ENCODE measurements at regions of chr17 and their contacts with region 1.

Region 1: GRCh38 chr17:2814481-2815341 is 18.5 kb downstream of the RAP1GAP2 start:
- DNase-seq: peak; percentile 98
- H3K4me3 Mint-ChIP-seq: peak overlapping the region; percentile 72
- H3K27ac Mint-ChIP-seq: peak overlapping the region; percentile 93
- H3K4me1 Mint-ChIP-seq: peaks cover 51% of the 10 kb centered on the region
- H3K27me3 Mint-ChIP-seq: peaks cover 22% of the 10 kb centered on the region

Region 2: GRCh38 chr17:2736956-2737355 is 77.8 kb before region 1 on chr17:
- CTCF ChIA-PET with region 1: no interaction called
- POLR2A ChIA-PET with region 1: no interaction called
- DNase-seq: no peak
- H3K4me3 Mint-ChIP-seq: no peak overlapping the region
- H3K27ac Mint-ChIP-seq: no peak overlapping the region
- H3K4me1 Mint-ChIP-seq: no peaks in the 10 kb centered on the region
- H3K27me3 Mint-ChIP-seq: peaks cover 5% of the 10 kb centered on the region

Region 3: GRCh38 chr17:2749784-2750181 is 64.9 kb before region 1 on chr17:
- CTCF ChIA-PET with region 1: no interaction called
- POLR2A ChIA-PET with region 1: no interaction called
- DNase-seq: peak; percentile 77
- H3K4me3 Mint-ChIP-seq: no peak overlapping the region
- H3K27ac Mint-ChIP-seq: no peak overlapping the region
- H3K4me1 Mint-ChIP-seq: peaks cover 3% of the 10 kb centered on the region
- H3K27me3 Mint-ChIP-seq: peaks cover 35% of the 10 kb centered on the region

Region 4: GRCh38 chr17:2796164-2797125 is 18.3 kb before region 1 on chr17 and contains the start of gene RAP1GAP2:
- CTCF ChIA-PET with region 1: interaction called, 137 read pairs
- POLR2A ChIA-PET with region 1: interaction called, 346 read pairs
- DNase-seq: peak; percentile 91
- H3K4me3 Mint-ChIP-seq: peak within 1 kb of the TSS; percentile 97
- H3K27ac Mint-ChIP-seq: peak within 1 kb of the TSS; percentile 77
- H3K4me1 Mint-ChIP-seq: peaks cover 86% of the 10 kb centered on the region
- H3K27me3 Mint-ChIP-seq: peaks cover 18% of the 10 kb centered on the region
- total RNA-seq, gene RAP1GAP2: 36.7 to 39.8 TPM

Region 5: DNA sequence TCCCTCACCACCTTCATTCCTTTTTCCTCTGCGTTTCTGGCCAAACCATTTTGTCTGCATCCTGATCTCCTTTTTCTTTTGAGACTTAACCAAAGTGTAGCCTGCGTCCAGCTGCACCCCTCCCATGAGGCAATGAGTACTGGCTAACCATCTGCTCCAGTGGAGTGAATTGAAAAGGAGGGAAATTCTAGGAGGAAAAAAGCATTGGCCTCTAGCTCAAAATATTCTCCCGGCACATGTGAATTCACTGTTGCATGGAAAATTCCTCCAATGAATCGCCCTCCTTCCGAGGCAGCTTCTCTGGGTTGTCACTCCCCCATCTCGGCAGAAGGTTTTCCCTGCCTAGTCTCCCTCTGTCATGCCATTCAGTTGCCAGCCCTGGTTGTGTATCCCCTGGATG is 12.9 kb before region 1 on chr17:
- CTCF ChIA-PET with region 1: interaction called, 137 read pairs
- POLR2A ChIA-PET with region 1: interaction called, 346 read pairs
- DNase-seq: no peak
- H3K4me3 Mint-ChIP-seq: no peak overlapping the region
- H3K27ac Mint-ChIP-seq: no peak overlapping the region
- H3K4me1 Mint-ChIP-seq: peaks cover 47% of the 10 kb centered on the region
- H3K27me3 Mint-ChIP-seq: peaks cover 9% of the 10 kb centered on the region

Region 6: DNA sequence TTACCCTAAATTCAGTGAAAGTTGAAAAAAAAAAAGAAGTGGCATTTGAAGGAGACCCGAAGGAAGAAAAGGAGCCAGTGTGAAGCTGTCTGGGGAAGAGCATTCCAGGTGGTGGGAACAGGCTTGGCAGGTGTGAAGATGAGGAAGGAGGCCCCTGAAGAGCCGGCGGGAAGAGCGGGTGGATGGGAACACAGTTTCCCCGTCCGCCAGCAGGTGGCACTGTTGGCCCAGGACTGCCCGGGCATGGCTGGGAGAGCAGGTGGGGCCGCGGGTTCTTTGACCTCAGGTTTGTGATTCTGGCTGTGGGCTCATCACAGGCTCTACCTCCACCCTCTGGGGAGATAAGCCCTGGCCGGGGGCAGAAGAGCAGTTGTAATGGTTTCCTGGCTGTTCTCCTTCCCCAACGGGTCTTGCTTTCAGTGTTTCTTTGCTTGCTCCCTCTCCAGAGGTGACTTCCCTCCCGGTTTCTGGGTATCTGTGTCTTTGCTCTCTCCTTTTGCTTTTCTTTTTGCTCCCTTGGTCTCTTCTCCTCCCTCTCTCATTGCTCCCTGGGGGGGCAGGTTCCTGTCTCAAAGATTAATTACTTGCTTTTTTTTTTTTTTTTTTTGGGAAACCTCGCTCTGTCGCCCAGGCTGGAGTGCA is 13.8 kb after region 1 on chr17:
- CTCF ChIA-PET with region 1: interaction called, 39 read pairs
- POLR2A ChIA-PET with region 1: interaction called, 8 read pairs
- DNase-seq: peak; percentile 81
- H3K4me3 Mint-ChIP-seq: no peak overlapping the region
- H3K27ac Mint-ChIP-seq: no peak overlapping the region
- H3K4me1 Mint-ChIP-seq: peaks cover 40% of the 10 kb centered on the region
- H3K27me3 Mint-ChIP-seq: peaks cover 7% of the 10 kb centered on the region

Region 7: DNA sequence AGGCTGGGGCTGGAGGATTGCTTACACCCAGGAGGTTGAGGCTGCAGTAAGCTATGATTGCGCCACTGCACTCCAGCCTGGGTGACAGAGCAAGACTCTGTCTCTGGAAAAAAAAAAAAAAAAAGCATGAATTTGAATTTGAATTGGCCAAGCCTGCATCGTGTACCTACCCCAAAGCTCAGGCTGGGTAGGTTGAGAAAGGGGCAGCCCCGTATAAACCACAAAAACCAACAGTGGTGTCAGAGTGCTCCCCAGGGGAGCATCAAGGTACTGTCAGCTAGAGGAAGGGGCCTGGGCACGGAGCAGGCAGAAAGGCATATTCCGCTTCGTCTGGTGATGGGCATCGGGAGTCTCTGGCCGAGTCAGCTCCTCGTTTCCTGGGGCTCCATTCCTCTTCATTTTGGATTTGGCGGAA is 22.4 kb after region 1 on chr17:
- CTCF ChIA-PET with region 1: interaction called, 9 read pairs
- POLR2A ChIA-PET with region 1: interaction called, 10 read pairs
- DNase-seq: peak; percentile 49
- H3K4me3 Mint-ChIP-seq: no peak overlapping the region
- H3K27ac Mint-ChIP-seq: no peak overlapping the region
- H3K4me1 Mint-ChIP-seq: peaks cover 23% of the 10 kb centered on the region
- H3K27me3 Mint-ChIP-seq: peaks cover 2% of the 10 kb centered on the region

Region 8: DNA sequence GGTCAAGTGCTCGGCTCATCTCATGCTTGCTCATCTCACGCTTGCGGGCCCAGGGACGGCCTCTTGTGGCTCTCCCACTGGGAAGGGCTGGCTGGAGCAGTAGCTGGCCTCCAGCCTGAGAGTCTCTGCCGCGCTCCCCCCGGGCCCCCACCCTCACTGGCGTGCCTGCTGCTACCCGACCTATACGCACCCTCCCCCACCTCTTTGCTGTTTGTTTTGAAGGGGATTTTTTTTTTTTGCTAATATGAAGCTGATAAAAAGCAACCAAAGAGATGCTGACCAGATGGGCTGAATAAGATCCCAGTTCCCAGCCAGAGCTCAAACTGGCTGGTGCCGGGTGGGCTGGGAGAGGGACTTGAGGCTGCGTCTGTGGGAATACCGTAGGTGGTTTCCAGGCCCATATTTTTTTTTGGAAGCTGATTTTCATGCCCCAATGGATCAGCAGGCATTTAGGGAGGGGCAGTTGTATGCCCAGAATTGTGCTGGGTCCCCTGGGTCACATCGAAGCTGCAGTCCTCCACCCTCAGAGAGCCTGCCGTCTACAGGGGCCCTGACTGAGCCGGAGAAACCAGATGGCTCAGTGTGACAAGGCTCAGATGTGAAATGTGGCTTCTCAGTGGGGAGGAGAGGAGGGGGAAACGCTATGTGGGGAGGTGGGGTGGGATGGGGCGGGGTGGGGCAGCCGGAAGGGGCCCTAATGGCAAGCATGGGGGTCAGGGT is 96.5 kb after region 1 on chr17:
- CTCF ChIA-PET with region 1: no interaction called
- POLR2A ChIA-PET with region 1: no interaction called
- DNase-seq: no peak
- H3K4me3 Mint-ChIP-seq: no peak overlapping the region
- H3K27ac Mint-ChIP-seq: no peak overlapping the region
- H3K4me1 Mint-ChIP-seq: peaks cover 14% of the 10 kb centered on the region
- H3K27me3 Mint-ChIP-seq: no peaks in the 10 kb centered on the region

Measured in activated CD4-positive, alpha-beta memory T cell treated with anti-CD3 and anti-CD28 coated beads, Interleukin-2, amount 10 ng/mL, durations not matched to agents 7 days and 5 days (primary cell).